ENCODE measurements at regions of chr19 and their contacts with region 1.

Region 1: GRCh38 chr19:32041681-32042292 is 303.6 kb upstream of the ZNF507 start:
- DNase-seq: peak; percentile 69
- H3K4me3 ChIP-seq: peak overlapping the region; percentile 43
- H3K27ac ChIP-seq: no peak overlapping the region
- H3K4me1 ChIP-seq: peaks cover 3% of the 10 kb centered on the region
- H3K27me3 ChIP-seq: no peaks in the 10 kb centered on the region
- CTCF ChIP-seq: peak; percentile 97

Region 2: GRCh38 chr19:30696514-30696913 is 1345.3 kb before region 1 on chr19:
- CTCF ChIA-PET with region 1: no interaction called
- POLR2A ChIA-PET with region 1: no interaction called
- intact Hi-C with region 1: loop called (anchors 5 kb)
- DNase-seq: peak; percentile 67
- H3K4me3 ChIP-seq: no peak overlapping the region
- H3K27ac ChIP-seq: no peak overlapping the region
- H3K4me1 ChIP-seq: peaks cover 31% of the 10 kb centered on the region
- H3K27me3 ChIP-seq: no peaks in the 10 kb centered on the region
- CTCF ChIP-seq: peak; percentile 73

Region 3: GRCh38 chr19:32091241-32091640 is 49.5 kb after region 1 on chr19:
- CTCF ChIA-PET with region 1: no interaction called
- POLR2A ChIA-PET with region 1: no interaction called
- intact Hi-C with region 1: no loop called
- DNase-seq: no peak
- H3K4me3 ChIP-seq: no peak overlapping the region
- H3K27ac ChIP-seq: no peak overlapping the region
- H3K4me1 ChIP-seq: no peaks in the 10 kb centered on the region
- H3K27me3 ChIP-seq: no peaks in the 10 kb centered on the region
- CTCF ChIP-seq: no peak

Region 4: GRCh38 chr19:32224371-32225244 is 182.8 kb after region 1 on chr19:
- CTCF ChIA-PET with region 1: no interaction called
- POLR2A ChIA-PET with region 1: no interaction called
- intact Hi-C with region 1: loop called (anchors 10 kb)
- DNase-seq: peak; percentile 51
- H3K4me3 ChIP-seq: peak overlapping the region; percentile 26
- H3K27ac ChIP-seq: no peak overlapping the region
- H3K4me1 ChIP-seq: peaks cover 10% of the 10 kb centered on the region
- H3K27me3 ChIP-seq: no peaks in the 10 kb centered on the region
- CTCF ChIP-seq: peak; percentile 89

Region 5: GRCh38 chr19:32373585-32374295 is 332.0 kb after region 1 on chr19:
- CTCF ChIA-PET with region 1: no interaction called
- POLR2A ChIA-PET with region 1: interaction called, 11 read pairs
- intact Hi-C with region 1: no loop called
- DNase-seq: peak; percentile 29
- H3K4me3 ChIP-seq: no peak overlapping the region
- H3K27ac ChIP-seq: no peak overlapping the region
- H3K4me1 ChIP-seq: no peaks in the 10 kb centered on the region
- H3K27me3 ChIP-seq: no peaks in the 10 kb centered on the region
- CTCF ChIP-seq: no peak

Measured in A673 (cell line).